B cell (primary cell): ENCODE measurements at regions of chr12 and their contacts with region 1.

Region 1: DNA sequence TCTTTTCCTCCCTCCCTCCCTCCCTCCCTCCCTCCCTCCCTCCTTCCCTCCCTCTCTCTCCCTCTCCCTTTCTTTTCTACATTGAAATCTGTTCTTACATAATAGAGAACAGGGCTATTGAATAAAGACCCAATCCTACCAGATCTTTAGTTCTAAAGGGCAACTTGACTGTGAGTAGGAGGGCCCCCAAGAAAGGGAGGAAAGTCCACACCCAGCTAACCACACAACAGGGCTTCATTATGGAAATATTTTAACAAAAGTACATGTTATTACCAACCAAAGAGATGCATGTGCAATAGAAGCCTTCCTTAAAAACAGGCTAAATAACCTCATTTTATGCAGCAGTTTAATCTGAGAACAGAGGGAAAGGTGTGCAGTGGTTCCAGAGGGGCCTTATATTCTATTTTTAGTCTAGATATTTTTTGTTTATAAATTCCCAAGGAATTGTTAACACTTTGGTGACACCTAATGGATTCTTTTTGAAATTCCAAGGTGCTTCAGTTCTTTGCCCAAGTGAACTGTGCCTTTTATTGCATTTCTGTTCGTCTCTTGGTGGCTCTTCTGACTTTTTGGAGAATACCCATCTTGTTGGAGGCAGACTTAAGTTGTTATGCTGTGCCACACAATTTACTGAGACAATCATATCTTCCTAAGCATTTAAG is 63.0 kb downstream of the GNS start:
- DNase-seq: no peak
- ATAC-seq: no peak
- H3K4me3 ChIP-seq: no peak overlapping the region
- H3K4me3 Mint-ChIP-seq: no peak overlapping the region
- H3K27ac ChIP-seq: peak overlapping the region in 1 of 2 donors; percentile 46
- H3K27ac Mint-ChIP-seq: no peak overlapping the region
- H3K4me1 ChIP-seq: peaks cover 6 to 13% of the 10 kb centered on the region in 2 donors
- H3K4me1 Mint-ChIP-seq: peaks cover 28% of the 10 kb centered on the region
- H3K27me3 ChIP-seq: no peaks in the 10 kb centered on the region
- H3K27me3 Mint-ChIP-seq: no peaks in the 10 kb centered on the region
- CTCF ChIP-seq: no peak

Region 2: GRCh38 chr12:64551698-64552097 is 144.5 kb before region 1 on chr12:
- CTCF ChIA-PET with region 1: interaction called, 352 read pairs
- POLR2A ChIA-PET with region 1: interaction called, 4 read pairs
- intact Hi-C with region 1: loop called (anchors 1 kb)
- DNase-seq: no peak
- ATAC-seq: no peak
- H3K4me3 ChIP-seq: no peak overlapping the region
- H3K4me3 Mint-ChIP-seq: no peak overlapping the region
- H3K27ac ChIP-seq: no peak overlapping the region
- H3K27ac Mint-ChIP-seq: no peak overlapping the region
- H3K4me1 ChIP-seq: peaks cover 0 to 3% of the 10 kb centered on the region in 2 donors
- H3K4me1 Mint-ChIP-seq: no peaks in the 10 kb centered on the region
- H3K27me3 ChIP-seq: no peaks in the 10 kb centered on the region
- H3K27me3 Mint-ChIP-seq: no peaks in the 10 kb centered on the region
- CTCF ChIP-seq: no peak

Region 3: DNA sequence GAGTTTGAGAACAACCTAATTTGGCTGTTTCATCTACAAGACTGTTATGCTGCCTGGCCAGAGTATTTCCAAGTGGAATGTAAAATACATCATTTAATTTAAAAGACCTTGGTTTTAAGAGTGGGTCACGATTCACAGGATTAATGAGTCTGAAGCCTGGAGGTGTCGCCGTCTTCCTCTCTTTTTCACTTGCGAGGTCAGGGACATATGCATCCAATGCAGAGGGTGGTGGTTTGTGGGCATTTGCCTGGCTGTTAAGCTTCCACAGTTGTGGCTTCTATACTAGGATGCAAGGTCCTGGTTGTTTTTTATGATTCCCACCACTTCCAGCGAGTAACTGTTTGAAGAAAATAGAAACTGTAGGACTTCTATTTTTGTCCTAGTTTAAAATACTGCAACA is 108.8 kb before region 1 on chr12:
- CTCF ChIA-PET with region 1: interaction called, 48 read pairs
- POLR2A ChIA-PET with region 1: no interaction called
- intact Hi-C with region 1: loop called (anchors 1 kb)
- DNase-seq: no peak
- ATAC-seq: no peak
- H3K4me3 ChIP-seq: no peak overlapping the region
- H3K4me3 Mint-ChIP-seq: no peak overlapping the region
- H3K27ac ChIP-seq: no peak overlapping the region
- H3K27ac Mint-ChIP-seq: no peak overlapping the region
- H3K4me1 ChIP-seq: peaks cover 8 to 13% of the 10 kb centered on the region in 2 donors
- H3K4me1 Mint-ChIP-seq: peaks cover 11% of the 10 kb centered on the region
- H3K27me3 ChIP-seq: no peaks in the 10 kb centered on the region
- H3K27me3 Mint-ChIP-seq: peaks cover 4% of the 10 kb centered on the region
- CTCF ChIP-seq: no peak

Region 4: DNA sequence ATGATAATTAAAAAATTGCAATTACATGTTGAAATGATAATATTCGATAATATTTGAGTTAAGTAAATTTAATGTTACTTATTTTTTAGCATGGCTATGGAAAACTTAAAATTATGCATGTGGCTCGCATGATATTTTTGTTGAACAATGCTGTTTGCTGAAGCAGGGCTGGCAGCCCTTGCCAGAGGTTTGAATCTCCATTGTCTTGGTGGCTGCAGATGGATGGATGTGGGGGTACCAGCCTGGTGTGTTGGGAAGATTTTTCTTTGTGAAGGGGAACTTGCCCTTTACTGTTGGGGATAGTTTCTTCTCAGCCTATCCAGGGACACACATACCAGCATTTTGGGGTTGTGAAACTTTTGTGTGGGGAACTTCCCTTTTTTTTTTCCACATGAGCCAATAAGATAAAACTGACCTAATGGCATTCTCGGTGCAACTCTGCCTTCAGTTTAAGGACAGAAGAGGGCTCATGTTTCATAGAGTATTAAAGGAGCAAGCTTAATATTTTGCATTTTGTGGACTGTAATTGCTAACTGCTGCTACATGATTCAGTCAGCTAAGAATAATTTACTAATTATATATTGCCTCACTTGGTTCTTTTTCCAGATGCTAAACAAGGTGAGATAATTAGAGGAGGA is 77.1 kb before region 1 on chr12:
- CTCF ChIA-PET with region 1: interaction called, 11 read pairs
- POLR2A ChIA-PET with region 1: interaction called, 5 read pairs
- intact Hi-C with region 1: no loop called
- DNase-seq: peak; percentile 86
- ATAC-seq: peak; percentile 61
- H3K4me3 ChIP-seq: peak overlapping the region in 3 of 5 experiments; percentile 16 to 47 (median 31)
- H3K4me3 Mint-ChIP-seq: peak overlapping the region; percentile 77
- H3K27ac ChIP-seq: peak overlapping the region; percentile 89 to 94
- H3K27ac Mint-ChIP-seq: peak overlapping the region; percentile 91
- H3K4me1 ChIP-seq: peaks cover 90 to 99% of the 10 kb centered on the region in 2 donors
- H3K4me1 Mint-ChIP-seq: peaks cover 72% of the 10 kb centered on the region
- H3K27me3 ChIP-seq: no peaks in the 10 kb centered on the region
- H3K27me3 Mint-ChIP-seq: no peaks in the 10 kb centered on the region
- CTCF ChIP-seq: no peak

Region 5: DNA sequence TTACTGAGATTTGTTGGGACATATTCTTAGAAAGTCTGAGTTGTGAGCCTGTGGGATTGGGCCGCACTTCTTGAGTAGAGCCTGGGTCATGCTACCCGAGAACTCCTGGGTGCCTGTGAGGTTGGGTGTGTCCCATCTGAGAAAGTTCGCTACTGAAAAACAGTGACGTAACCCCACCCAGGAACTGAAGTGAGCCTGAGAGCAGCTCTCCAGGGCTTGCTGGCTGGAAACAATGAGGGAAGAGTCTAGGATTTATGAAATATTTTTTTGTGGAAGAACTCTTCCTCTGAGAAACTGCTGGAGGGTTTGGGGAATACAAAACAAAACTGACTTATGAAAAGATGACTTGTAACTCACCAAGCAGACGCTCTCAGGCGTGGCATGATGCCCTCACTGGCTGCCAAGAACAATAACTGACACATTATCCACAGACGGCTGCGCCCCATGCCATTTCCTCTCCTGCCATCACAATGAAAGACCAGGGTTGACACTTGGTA is 16.7 kb before region 1 on chr12:
- CTCF ChIA-PET with region 1: interaction called, 28 read pairs
- POLR2A ChIA-PET with region 1: interaction called, 5 read pairs
- intact Hi-C with region 1: no loop called
- DNase-seq: peak; percentile 63
- ATAC-seq: peak; percentile 65
- H3K4me3 ChIP-seq: peak overlapping the region in 1 of 5 experiments; percentile 26
- H3K4me3 Mint-ChIP-seq: peak overlapping the region; percentile 71
- H3K27ac ChIP-seq: peak overlapping the region; percentile 62 to 66
- H3K27ac Mint-ChIP-seq: peak overlapping the region; percentile 89
- H3K4me1 ChIP-seq: peaks cover 80 to 84% of the 10 kb centered on the region in 2 donors
- H3K4me1 Mint-ChIP-seq: peaks cover 80% of the 10 kb centered on the region
- H3K27me3 ChIP-seq: no peaks in the 10 kb centered on the region
- H3K27me3 Mint-ChIP-seq: no peaks in the 10 kb centered on the region
- CTCF ChIP-seq: no peak